HAP-1 (cell line): ENCODE measurements at regions of chr3 and their contacts with region 1.

Region 1: GRCh38 chr3:192816351-192816750 is 89.0 kb upstream of the FGF12 start:
- DNase-seq: peak; percentile 20 to 71
- H3K4me3 ChIP-seq: no peak overlapping the region
- H3K4me1 ChIP-seq: peaks cover 58% of the 10 kb centered on the region
- H3K27me3 ChIP-seq: no peaks in the 10 kb centered on the region

Region 2: DNA sequence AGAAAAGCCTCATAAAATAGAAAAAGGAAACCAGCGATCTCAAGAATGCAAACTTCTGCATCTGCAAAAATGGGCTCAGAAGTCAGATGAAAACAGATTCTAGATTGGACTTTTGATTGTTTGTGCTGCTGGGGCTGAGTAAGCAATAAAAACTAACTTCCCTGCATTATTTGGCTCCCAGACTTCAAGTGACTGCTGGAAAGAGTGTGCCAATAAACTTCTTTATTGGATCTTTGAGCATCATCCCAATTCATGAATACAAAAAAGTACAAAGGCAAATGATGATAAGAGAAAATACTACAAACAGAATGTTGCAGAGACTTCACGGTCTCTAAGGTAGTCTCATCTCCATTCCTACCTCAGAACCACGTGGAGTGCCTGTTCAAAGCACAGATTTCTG is 186.9 kb before region 1 on chr3:
- in situ Hi-C with region 1: no loop called
- DNase-seq: no peak
- H3K4me3 ChIP-seq: no peak overlapping the region
- H3K4me1 ChIP-seq: no peaks in the 10 kb centered on the region
- H3K27me3 ChIP-seq: no peaks in the 10 kb centered on the region

Region 3: DNA sequence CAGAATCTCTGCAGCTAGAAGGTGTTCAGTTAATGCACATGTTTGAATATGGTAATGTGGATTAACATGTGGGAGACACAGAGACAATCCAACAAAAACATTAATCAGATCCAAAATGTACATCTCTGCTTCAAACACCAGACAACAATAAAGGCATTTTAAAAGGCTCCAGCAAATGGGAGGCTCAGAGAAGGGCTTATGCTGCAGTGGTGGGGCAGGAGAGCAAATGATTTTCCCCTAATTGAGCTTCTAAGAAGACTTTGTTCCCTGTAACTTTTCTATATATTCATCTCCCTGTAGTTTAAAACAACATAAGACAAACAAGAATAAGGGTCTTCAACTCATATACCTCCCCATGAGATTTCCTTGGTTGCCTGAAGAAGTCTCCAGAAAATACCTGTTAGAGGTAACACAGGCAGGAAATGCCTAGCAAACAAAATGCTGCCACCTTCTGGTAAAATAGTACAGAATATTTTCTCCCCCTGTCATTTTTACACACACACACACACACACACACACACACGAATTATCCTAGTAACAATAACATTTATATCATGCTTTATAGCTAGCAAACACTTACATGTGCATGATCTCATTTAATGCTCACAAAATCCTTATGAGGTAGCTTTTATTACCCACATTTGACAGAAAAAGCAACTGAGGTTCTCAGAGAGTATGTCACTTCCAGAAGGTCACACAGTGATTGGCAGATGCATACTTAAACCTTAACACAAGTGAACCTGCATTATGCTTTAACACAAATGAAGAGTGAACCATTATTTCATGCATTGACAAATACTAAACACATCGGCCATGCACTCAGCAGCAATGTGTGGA is 224.7 kb after region 1 on chr3:
- in situ Hi-C with region 1: loop called (anchors 10 kb)
- DNase-seq: peak; percentile 31 to 51
- H3K4me3 ChIP-seq: no peak overlapping the region
- H3K4me1 ChIP-seq: peaks cover 19% of the 10 kb centered on the region
- H3K27me3 ChIP-seq: no peaks in the 10 kb centered on the region

Region 4: GRCh38 chr3:193129601-193130000 is 313.2 kb after region 1 on chr3:
- in situ Hi-C with region 1: loop called (anchors 10 kb)
- DNase-seq: peak in 1 of 2 experiments; percentile 31
- H3K4me3 ChIP-seq: no peak overlapping the region
- H3K4me1 ChIP-seq: peaks cover 9% of the 10 kb centered on the region
- H3K27me3 ChIP-seq: no peaks in the 10 kb centered on the region

Region 5: GRCh38 chr3:193465992-193466608 is 649.7 kb after region 1 on chr3:
- in situ Hi-C with region 1: loop called (anchors 10 kb)
- DNase-seq: no peak
- H3K4me3 ChIP-seq: no peak overlapping the region
- H3K4me1 ChIP-seq: no peaks in the 10 kb centered on the region
- H3K27me3 ChIP-seq: no peaks in the 10 kb centered on the region

Region 6: DNA sequence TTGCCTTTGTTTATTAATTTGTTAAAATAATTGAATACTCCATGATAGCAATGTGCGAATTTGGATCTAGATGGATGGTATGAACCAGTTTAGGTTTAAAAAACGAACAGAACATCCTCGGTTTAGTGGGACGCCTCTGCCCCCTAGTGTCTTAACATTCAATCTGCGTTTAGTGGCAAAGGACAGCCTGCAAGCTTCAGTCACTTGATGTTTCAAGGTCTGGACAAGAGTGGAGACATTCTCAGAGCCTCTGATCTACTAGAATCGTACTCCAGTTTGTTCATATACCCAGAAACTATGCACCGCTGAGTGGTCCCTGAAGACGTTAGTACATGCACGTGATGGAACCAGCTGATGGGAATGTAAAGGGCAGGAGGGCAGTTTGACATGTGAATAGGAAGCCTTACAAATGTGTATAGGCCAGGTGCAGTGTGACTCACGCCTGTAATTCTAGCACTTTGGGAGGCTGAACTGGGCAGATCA is 756.1 kb after region 1 on chr3:
- in situ Hi-C with region 1: loop called (anchors 5 kb)
- DNase-seq: peak; percentile 66 to 82
- H3K4me3 ChIP-seq: no peak overlapping the region
- H3K4me1 ChIP-seq: no peaks in the 10 kb centered on the region
- H3K27me3 ChIP-seq: peaks cover 2% of the 10 kb centered on the region; the same call in 1 of the 2 replicates